ENCODE measurements at regions of chr3 and their contacts with region 1.

Region 1: GRCh38 chr3:101518421-101518871 is 5.4 kb upstream of the SENP7 start:
- DNase-seq: peak in 8 of 9 donors; percentile 40 to 82 (median 76)
- ATAC-seq: peak; percentile 91
- H3K4me3 ChIP-seq: peak overlapping the region; percentile 17
- H3K4me3 Mint-ChIP-seq: peak overlapping the region; percentile 35 to 82 (median 62)
- H3K27ac ChIP-seq: peak overlapping the region; percentile 77
- H3K27ac Mint-ChIP-seq: peak overlapping the region; percentile 87 to 98 (median 96)
- H3K4me1 ChIP-seq: peaks cover 54 to 62% of the 10 kb centered on the region in 2 donors
- H3K4me1 Mint-ChIP-seq: peaks cover 20 to 80% (median 71%) of the 10 kb centered on the region in 7 donors
- H3K27me3 ChIP-seq: no peaks in the 10 kb centered on the region
- H3K27me3 Mint-ChIP-seq: no peaks in the 10 kb centered on the region

Region 2: DNA sequence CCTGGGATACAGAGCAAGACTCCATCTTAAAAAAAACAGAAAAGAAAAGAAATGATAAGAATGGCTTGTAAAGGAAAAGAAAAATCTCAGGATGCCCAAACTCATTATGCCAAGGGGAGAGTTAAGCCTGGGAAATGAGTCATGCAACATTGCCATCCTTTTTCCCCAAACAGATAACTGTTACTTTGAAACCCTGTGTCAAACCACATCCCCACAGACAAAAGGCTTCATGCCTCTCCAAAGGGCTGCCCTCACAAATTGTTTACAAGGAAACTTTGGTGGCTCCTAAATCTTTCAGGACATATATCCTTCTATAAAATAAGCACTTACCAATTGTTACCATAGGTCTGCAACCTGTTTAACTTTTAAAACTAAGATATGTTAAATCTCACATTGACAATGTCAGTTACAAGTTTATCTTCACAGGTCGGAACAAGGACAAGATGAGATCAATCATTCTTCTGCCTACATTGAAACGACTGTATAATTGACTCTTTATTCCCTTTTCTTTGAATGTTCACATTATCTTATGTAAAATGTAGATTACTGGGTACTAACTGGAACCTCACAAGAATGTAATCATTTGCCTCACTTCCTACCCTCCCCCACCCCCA is 13.1 kb after region 1 on chr3:
- CTCF ChIA-PET with region 1: interaction called, 10 read pairs
- POLR2A ChIA-PET with region 1: interaction called, 36 read pairs
- intact Hi-C with region 1: loop called in 1 of 2 experiments (anchors 1 kb)
- DNase-seq: peak in 2 of 9 donors; percentile 18 to 31
- ATAC-seq: peak; percentile 52
- H3K4me3 ChIP-seq: no peak overlapping the region
- H3K4me3 Mint-ChIP-seq: peak overlapping the region; percentile 29 to 70 (median 59)
- H3K27ac ChIP-seq: peak overlapping the region; percentile 57
- H3K27ac Mint-ChIP-seq: peak overlapping the region; percentile 8 to 95 (median 93)
- H3K4me1 ChIP-seq: peaks cover 6 to 32% of the 10 kb centered on the region in 2 donors
- H3K4me1 Mint-ChIP-seq: peaks cover 22 to 57% (median 46%) of the 10 kb centered on the region in 7 donors
- H3K27me3 ChIP-seq: no peaks in the 10 kb centered on the region
- H3K27me3 Mint-ChIP-seq: no peaks in the 10 kb centered on the region

Region 3: DNA sequence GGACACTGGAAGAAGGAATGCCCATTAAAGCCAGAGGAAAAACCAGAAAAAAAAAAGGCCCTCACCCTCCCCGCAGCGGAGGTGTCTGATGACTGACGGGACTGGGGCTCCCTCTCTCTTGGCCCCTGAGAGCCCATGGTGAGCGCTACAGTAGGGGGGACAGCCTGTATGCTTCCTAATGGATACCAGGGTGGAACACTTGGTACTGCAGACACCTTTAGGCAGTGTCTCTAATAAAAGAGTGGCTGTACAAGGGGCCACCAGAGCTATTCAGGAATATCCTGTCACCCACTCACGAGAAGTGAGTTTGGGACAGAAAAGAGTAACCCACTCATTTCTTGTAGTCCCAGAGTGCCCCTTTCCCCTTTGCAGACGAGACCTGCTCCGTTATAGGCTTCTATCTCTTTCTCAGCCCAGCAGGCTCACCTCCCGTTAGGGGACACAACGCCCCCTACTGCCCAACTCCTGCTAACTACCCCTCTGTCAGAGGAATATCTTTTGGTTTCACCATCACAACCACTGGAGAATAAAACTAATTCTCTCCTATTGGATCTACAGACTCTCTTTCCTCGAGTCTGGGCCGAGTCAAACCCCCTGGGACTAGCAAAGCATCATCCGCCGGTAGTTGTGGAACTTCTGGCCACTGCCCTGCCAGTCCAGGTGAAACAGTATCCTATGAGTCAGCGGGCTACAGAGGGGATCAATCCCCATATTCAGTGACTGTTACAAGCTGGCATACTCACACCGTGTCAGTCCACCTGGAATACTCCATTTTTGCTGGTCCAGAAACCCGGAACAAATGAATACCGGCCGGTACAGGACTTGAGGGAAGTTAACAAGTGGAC is 117.7 kb after region 1 on chr3:
- CTCF ChIA-PET with region 1: no interaction called
- POLR2A ChIA-PET with region 1: no interaction called
- intact Hi-C with region 1: no loop called
- DNase-seq: peak; percentile 31 to 72 (median 65)
- ATAC-seq: peak; percentile 92
- H3K4me3 ChIP-seq: no peak overlapping the region
- H3K4me3 Mint-ChIP-seq: no peak overlapping the region
- H3K27ac ChIP-seq: no peak overlapping the region
- H3K27ac Mint-ChIP-seq: no peak overlapping the region
- H3K4me1 ChIP-seq: no peaks in the 10 kb centered on the region
- H3K4me1 Mint-ChIP-seq: peaks cover 0 to 5% (median 4%) of the 10 kb centered on the region in 7 donors
- H3K27me3 ChIP-seq: no peaks in the 10 kb centered on the region
- H3K27me3 Mint-ChIP-seq: no peaks in the 10 kb centered on the region